ENCODE measurements at regions of chr15 and their contacts with region 1.

Region 1: DNA sequence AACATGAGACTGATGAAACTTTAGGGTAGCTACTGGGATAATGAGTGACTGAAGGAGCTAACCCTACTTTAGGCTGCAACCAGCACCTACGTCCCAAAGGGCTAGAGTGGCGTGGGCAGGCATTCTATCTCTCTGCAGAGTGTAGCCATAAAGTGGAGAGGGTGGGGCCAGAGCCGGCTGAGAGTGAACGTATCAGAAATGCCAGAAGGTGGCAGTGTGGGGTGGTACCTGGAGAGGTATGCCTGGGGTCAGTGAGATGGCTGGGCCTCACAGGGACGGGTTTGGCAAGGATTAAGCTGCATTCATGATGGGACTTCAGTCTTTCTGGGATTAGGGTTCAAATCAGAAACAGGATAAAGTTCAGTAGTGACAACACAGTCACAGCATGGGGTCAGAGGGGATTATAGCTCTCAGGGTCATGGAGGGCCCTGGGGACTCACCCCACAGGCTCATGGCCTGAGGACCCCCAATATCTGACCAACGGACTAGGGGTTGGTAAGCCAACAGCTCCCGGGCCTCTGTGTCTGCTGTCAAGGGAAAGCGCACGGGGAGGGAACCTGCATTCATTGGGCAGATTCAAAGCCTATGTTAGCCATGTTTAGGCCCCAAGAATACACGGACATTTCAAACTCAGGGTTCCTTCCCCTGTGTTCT is 86.5 kb upstream of the FOXB1 start:
- DNase-seq: peak; percentile 25 to 66 (median 46)
- H3K4me3 ChIP-seq: no peak overlapping the region
- H3K4me3 Mint-ChIP-seq: no peak overlapping the region
- H3K27ac ChIP-seq: no peak overlapping the region
- H3K27ac Mint-ChIP-seq: no peak overlapping the region
- H3K4me1 ChIP-seq: peaks cover 11% of the 10 kb centered on the region
- H3K4me1 Mint-ChIP-seq: peaks cover 15 to 18% (median 17%) of the 10 kb centered on the region in 3 donors
- H3K27me3 ChIP-seq: no peaks in the 10 kb centered on the region
- H3K27me3 Mint-ChIP-seq: peaks cover 14 to 21% of the 10 kb centered on the region in 2 donors

Region 2: GRCh38 chr15:58510715-58511598 is 1406.7 kb before region 1 on chr15:
- CTCF ChIA-PET with region 1: no interaction called
- POLR2A ChIA-PET with region 1: no interaction called
- DNase-seq: no peak
- H3K4me3 ChIP-seq: no peak overlapping the region
- H3K4me3 Mint-ChIP-seq: no peak overlapping the region
- H3K27ac ChIP-seq: no peak overlapping the region
- H3K27ac Mint-ChIP-seq: no peak overlapping the region
- H3K4me1 ChIP-seq: peaks cover 14% of the 10 kb centered on the region
- H3K4me1 Mint-ChIP-seq: peaks cover 12 to 21% (median 21%) of the 10 kb centered on the region in 3 donors
- H3K27me3 ChIP-seq: no peaks in the 10 kb centered on the region
- H3K27me3 Mint-ChIP-seq: peaks cover 0 to 1% of the 10 kb centered on the region in 2 donors

Region 3: GRCh38 chr15:59933607-59934006 is 16.0 kb after region 1 on chr15:
- CTCF ChIA-PET with region 1: interaction called, 12 read pairs
- POLR2A ChIA-PET with region 1: no interaction called
- DNase-seq: no peak
- H3K4me3 ChIP-seq: no peak overlapping the region
- H3K4me3 Mint-ChIP-seq: no peak overlapping the region
- H3K27ac ChIP-seq: no peak overlapping the region
- H3K27ac Mint-ChIP-seq: no peak overlapping the region
- H3K4me1 ChIP-seq: no peaks in the 10 kb centered on the region
- H3K4me1 Mint-ChIP-seq: no peaks in the 10 kb centered on the region
- H3K27me3 ChIP-seq: no peaks in the 10 kb centered on the region
- H3K27me3 Mint-ChIP-seq: peaks cover 4 to 52% of the 10 kb centered on the region in 2 donors

Measured in CD8-positive, alpha-beta memory T cell (primary cell).